Naive thymus-derived CD4-positive, alpha-beta T cell (primary cell): ENCODE measurements at regions of chr6 and their contacts with region 1.

Region 1: DNA sequence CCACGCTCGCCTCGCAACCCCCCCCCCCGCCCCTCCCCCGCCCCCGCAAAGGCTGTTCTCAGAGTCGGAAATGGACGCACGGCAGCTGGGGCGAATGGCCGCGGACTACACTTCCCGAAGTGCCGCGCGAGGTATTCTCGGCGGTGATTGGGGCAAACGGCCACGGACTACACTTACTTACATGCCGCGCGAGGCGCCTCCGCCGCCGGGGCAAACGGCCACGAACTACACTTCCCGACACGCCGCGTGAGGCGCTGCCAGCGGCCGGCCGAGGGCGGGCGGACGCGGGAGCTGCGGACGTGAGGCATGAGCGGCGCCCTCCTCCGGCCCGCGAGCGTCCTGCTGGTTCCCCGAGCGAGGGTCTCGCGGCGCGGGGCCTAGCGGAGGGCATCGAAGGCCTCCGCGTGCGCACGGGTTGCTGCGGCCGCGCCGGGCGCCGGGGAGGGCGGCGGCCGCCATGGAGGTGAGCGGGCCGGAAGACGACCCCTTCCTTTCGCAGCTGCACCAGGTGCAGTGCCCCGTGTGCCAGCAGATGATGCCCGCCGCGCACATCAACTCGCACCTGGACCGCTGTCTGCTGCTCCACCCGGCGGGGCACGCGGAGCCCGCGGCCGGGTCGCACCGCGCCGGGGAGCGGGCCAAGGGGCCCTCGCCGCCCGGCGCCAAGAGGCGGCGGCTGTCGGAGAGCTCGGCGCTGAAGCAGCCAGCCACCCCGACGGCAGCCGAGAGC is at the start of gene WRNIP1:
- DNase-seq: peak; percentile 89 to 97 (median 97)
- ATAC-seq: peak; percentile 90
- H3K4me3 ChIP-seq: peak within 1 kb of the TSS; percentile 76
- H3K4me3 Mint-ChIP-seq: peak within 1 kb of the TSS; percentile 86 to 96 (median 94)
- H3K27ac ChIP-seq: peak within 1 kb of the TSS; percentile 88
- H3K27ac Mint-ChIP-seq: peak within 1 kb of the TSS; percentile 89 to 100 (median 99)
- H3K4me1 ChIP-seq: peaks cover 30 to 31% of the 10 kb centered on the region in 2 donors
- H3K4me1 Mint-ChIP-seq: peaks cover 27 to 54% (median 50%) of the 10 kb centered on the region in 7 donors
- H3K27me3 ChIP-seq: no peaks in the 10 kb centered on the region
- H3K27me3 Mint-ChIP-seq: no peaks in the 10 kb centered on the region
- total RNA-seq, gene WRNIP1: 31.2 to 47.6 (median 37.8) TPM

Region 2: DNA sequence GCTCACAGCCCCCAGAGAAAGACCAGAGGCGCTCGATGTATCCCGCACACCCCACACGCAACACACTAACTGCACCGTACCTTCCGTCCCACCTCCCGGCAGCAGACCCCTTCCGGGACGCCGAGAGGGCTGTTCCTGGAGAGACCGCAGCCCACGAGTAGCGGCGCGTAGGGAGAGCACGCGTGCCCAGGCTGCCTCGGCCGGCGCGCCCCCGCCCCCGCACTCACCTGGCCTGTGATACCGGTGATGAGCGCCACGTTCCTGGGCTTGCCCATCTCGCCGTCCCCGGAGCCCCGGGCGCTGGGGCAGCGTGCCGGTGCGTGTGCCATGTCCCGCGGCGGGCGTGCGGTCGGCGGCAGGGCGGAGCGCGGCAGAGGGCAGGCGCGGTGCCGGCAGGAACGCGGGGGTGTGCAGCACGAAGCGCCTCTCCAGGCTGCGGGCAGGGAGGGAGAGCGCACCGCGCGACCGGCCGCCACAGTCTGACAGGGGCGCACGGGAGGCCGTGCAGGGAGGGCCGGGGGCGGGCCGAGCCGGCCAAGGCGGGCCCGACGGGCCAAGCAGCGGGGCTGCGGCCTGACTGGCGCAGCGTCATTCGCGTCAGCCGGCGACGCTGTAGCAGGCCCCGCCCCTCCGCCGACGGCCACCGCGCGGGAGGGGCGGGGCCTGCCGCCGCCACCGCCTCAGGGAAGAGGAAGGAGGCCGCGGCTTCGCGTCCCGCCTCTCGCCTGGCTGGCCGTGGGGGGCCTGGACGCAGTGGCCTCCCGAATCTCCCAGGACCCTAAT is 520.0 kb before region 1 on chr6 and contains the start of gene GMDS:
- CTCF ChIA-PET with region 1: no interaction called
- POLR2A ChIA-PET with region 1: no interaction called
- intact Hi-C with region 1: loop called (anchors 1 to 10 kb)
- DNase-seq: peak; percentile 67 to 86 (median 79)
- ATAC-seq: peak; percentile 98
- H3K4me3 ChIP-seq: peak within 1 kb of the TSS; percentile 90
- H3K4me3 Mint-ChIP-seq: peak within 1 kb of the TSS; percentile 86 to 97 (median 93)
- H3K27ac ChIP-seq: peak within 1 kb of the TSS; percentile 96
- H3K27ac Mint-ChIP-seq: peak within 1 kb of the TSS; percentile 84 to 98 (median 95)
- H3K4me1 ChIP-seq: peaks cover 15 to 18% of the 10 kb centered on the region in 2 donors
- H3K4me1 Mint-ChIP-seq: peaks cover 41 to 77% (median 61%) of the 10 kb centered on the region in 7 donors
- H3K27me3 ChIP-seq: no peaks in the 10 kb centered on the region
- H3K27me3 Mint-ChIP-seq: no peaks in the 10 kb centered on the region
- total RNA-seq, gene GMDS: 12.7 to 33.9 (median 18.3) TPM

Region 3: GRCh38 chr6:2264932-2265331 is 500.4 kb before region 1 on chr6:
- CTCF ChIA-PET with region 1: no interaction called
- POLR2A ChIA-PET with region 1: no interaction called
- intact Hi-C with region 1: no loop called
- DNase-seq: no peak
- ATAC-seq: no peak
- H3K4me3 ChIP-seq: no peak overlapping the region
- H3K4me3 Mint-ChIP-seq: no peak overlapping the region
- H3K27ac ChIP-seq: no peak overlapping the region
- H3K27ac Mint-ChIP-seq: no peak overlapping the region
- H3K4me1 ChIP-seq: no peaks in the 10 kb centered on the region
- H3K4me1 Mint-ChIP-seq: peaks cover 0 to 5% (median 2%) of the 10 kb centered on the region in 7 donors
- H3K27me3 ChIP-seq: no peaks in the 10 kb centered on the region
- H3K27me3 Mint-ChIP-seq: no peaks in the 10 kb centered on the region

Region 4: DNA sequence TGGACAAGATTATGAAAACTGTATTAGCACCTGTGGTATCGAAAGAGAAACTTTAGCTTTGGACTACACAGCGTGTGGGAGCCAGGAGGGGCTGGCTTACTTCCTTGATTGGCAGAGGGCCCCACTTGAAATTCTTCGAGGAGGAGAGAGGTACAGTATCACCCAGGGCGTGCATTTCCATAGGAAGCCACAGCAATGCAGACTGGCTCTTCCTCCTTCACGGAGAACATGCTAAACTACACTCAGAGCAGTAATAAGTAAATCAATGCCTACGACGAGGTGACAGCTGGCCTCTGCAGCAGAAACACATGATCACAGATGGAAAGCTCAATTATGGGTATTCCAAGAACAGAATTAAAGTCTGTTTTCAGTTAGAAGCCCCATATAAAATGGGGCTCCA is 58.8 kb before region 1 on chr6:
- CTCF ChIA-PET with region 1: no interaction called
- POLR2A ChIA-PET with region 1: no interaction called
- intact Hi-C with region 1: no loop called
- DNase-seq: no peak
- ATAC-seq: no peak
- H3K4me3 ChIP-seq: no peak overlapping the region
- H3K4me3 Mint-ChIP-seq: no peak overlapping the region
- H3K27ac ChIP-seq: no peak overlapping the region
- H3K27ac Mint-ChIP-seq: no peak overlapping the region
- H3K4me1 ChIP-seq: no peaks in the 10 kb centered on the region
- H3K4me1 Mint-ChIP-seq: no peaks in the 10 kb centered on the region
- H3K27me3 ChIP-seq: no peaks in the 10 kb centered on the region
- H3K27me3 Mint-ChIP-seq: peaks cover 0 to 28% (median 12%) of the 10 kb centered on the region in 5 donors

Region 5: GRCh38 chr6:2718334-2719092 is 46.8 kb before region 1 on chr6:
- CTCF ChIA-PET with region 1: no interaction called
- POLR2A ChIA-PET with region 1: no interaction called
- intact Hi-C with region 1: no loop called
- DNase-seq: no peak
- ATAC-seq: peak; percentile 32
- H3K4me3 ChIP-seq: no peak overlapping the region
- H3K4me3 Mint-ChIP-seq: no peak overlapping the region
- H3K27ac ChIP-seq: no peak overlapping the region
- H3K27ac Mint-ChIP-seq: no peak overlapping the region
- H3K4me1 ChIP-seq: no peaks in the 10 kb centered on the region
- H3K4me1 Mint-ChIP-seq: peaks cover 0 to 9% (median 6%) of the 10 kb centered on the region in 7 donors
- H3K27me3 ChIP-seq: no peaks in the 10 kb centered on the region
- H3K27me3 Mint-ChIP-seq: peaks cover 0 to 7% (median 0%) of the 10 kb centered on the region in 5 donors

Region 6: GRCh38 chr6:2777250-2777649 is 11.9 kb after region 1 on chr6:
- CTCF ChIA-PET with region 1: interaction called, 7 read pairs
- POLR2A ChIA-PET with region 1: interaction called, 16 read pairs
- intact Hi-C with region 1: loop called in 1 of 2 experiments (anchors 2 kb)
- DNase-seq: no peak
- ATAC-seq: no peak
- H3K4me3 ChIP-seq: no peak overlapping the region
- H3K4me3 Mint-ChIP-seq: no peak overlapping the region
- H3K27ac ChIP-seq: no peak overlapping the region
- H3K27ac Mint-ChIP-seq: no peak overlapping the region
- H3K4me1 ChIP-seq: no peaks in the 10 kb centered on the region
- H3K4me1 Mint-ChIP-seq: peaks cover 23 to 57% (median 51%) of the 10 kb centered on the region in 7 donors
- H3K27me3 ChIP-seq: no peaks in the 10 kb centered on the region
- H3K27me3 Mint-ChIP-seq: no peaks in the 10 kb centered on the region

Region 7: GRCh38 chr6:2891768-2892170 is 126.4 kb after region 1 on chr6:
- CTCF ChIA-PET with region 1: no interaction called
- POLR2A ChIA-PET with region 1: no interaction called
- intact Hi-C with region 1: loop called in 1 of 2 experiments (anchors 5 kb)
- DNase-seq: peak in 8 of 9 donors; percentile 31 to 93 (median 79)
- ATAC-seq: peak; percentile 88
- H3K4me3 ChIP-seq: peak overlapping the region; percentile 34
- H3K4me3 Mint-ChIP-seq: peak overlapping the region; percentile 58 to 81 (median 69)
- H3K27ac ChIP-seq: peak overlapping the region; percentile 69
- H3K27ac Mint-ChIP-seq: peak overlapping the region; percentile 13 to 96 (median 90)
- H3K4me1 ChIP-seq: peaks cover 0 to 18% of the 10 kb centered on the region in 2 donors
- H3K4me1 Mint-ChIP-seq: peaks cover 22 to 80% (median 68%) of the 10 kb centered on the region in 7 donors
- H3K27me3 ChIP-seq: no peaks in the 10 kb centered on the region
- H3K27me3 Mint-ChIP-seq: no peaks in the 10 kb centered on the region

Region 8: GRCh38 chr6:3023663-3024483 is 258.5 kb after region 1 on chr6:
- CTCF ChIA-PET with region 1: no interaction called
- POLR2A ChIA-PET with region 1: no interaction called
- intact Hi-C with region 1: loop called (anchors 1 kb)
- DNase-seq: peak; percentile 57 to 89 (median 72)
- ATAC-seq: peak; percentile 90
- H3K4me3 ChIP-seq: peak overlapping the region; percentile 69
- H3K4me3 Mint-ChIP-seq: peak overlapping the region; percentile 80 to 94 (median 88)
- H3K27ac ChIP-seq: peak overlapping the region; percentile 18
- H3K27ac Mint-ChIP-seq: peak overlapping the region in 8 of 9 donors; percentile 58 to 98 (median 82)
- H3K4me1 ChIP-seq: peaks cover 29 to 38% of the 10 kb centered on the region in 2 donors
- H3K4me1 Mint-ChIP-seq: peaks cover 23 to 56% (median 43%) of the 10 kb centered on the region in 7 donors
- H3K27me3 ChIP-seq: no peaks in the 10 kb centered on the region
- H3K27me3 Mint-ChIP-seq: peaks cover 0 to 1% (median 0%) of the 10 kb centered on the region in 5 donors

Region 9: GRCh38 chr6:3258720-3259490 is 493.6 kb after region 1 on chr6 and contains the start of gene PSMG4:
- CTCF ChIA-PET with region 1: no interaction called
- POLR2A ChIA-PET with region 1: no interaction called
- intact Hi-C with region 1: loop called (anchors 1 to 2 kb)
- DNase-seq: peak; percentile 81 to 98 (median 89)
- ATAC-seq: peak; percentile 97
- H3K4me3 ChIP-seq: peak within 1 kb of the TSS; percentile 85
- H3K4me3 Mint-ChIP-seq: peak within 1 kb of the TSS; percentile 85 to 99 (median 97)
- H3K27ac ChIP-seq: peak within 1 kb of the TSS; percentile 80
- H3K27ac Mint-ChIP-seq: peak within 1 kb of the TSS; percentile 84 to 98 (median 92)
- H3K4me1 ChIP-seq: peaks cover 19 to 26% of the 10 kb centered on the region in 2 donors
- H3K4me1 Mint-ChIP-seq: peaks cover 28 to 45% (median 42%) of the 10 kb centered on the region in 7 donors
- H3K27me3 ChIP-seq: no peaks in the 10 kb centered on the region
- H3K27me3 Mint-ChIP-seq: peaks cover 0 to 25% (median 0%) of the 10 kb centered on the region in 5 donors
- total RNA-seq, gene PSMG4: 15.6 to 45.0 (median 27.7) TPM

Region 10: GRCh38 chr6:4135665-4136353 is 1370.5 kb after region 1 on chr6:
- CTCF ChIA-PET with region 1: no interaction called
- POLR2A ChIA-PET with region 1: no interaction called
- intact Hi-C with region 1: loop called (anchors 1 to 2 kb)
- DNase-seq: peak; percentile 74 to 93 (median 86)
- ATAC-seq: peak; percentile 97
- H3K4me3 ChIP-seq: peak overlapping the region; percentile 67
- H3K4me3 Mint-ChIP-seq: peak overlapping the region; percentile 83 to 94 (median 87)
- H3K27ac ChIP-seq: peak overlapping the region; percentile 76
- H3K27ac Mint-ChIP-seq: peak overlapping the region; percentile 55 to 88 (median 84)
- H3K4me1 ChIP-seq: peaks cover 10 to 14% of the 10 kb centered on the region in 2 donors
- H3K4me1 Mint-ChIP-seq: peaks cover 20 to 52% (median 37%) of the 10 kb centered on the region in 7 donors
- H3K27me3 ChIP-seq: no peaks in the 10 kb centered on the region
- H3K27me3 Mint-ChIP-seq: no peaks in the 10 kb centered on the region